ENCODE measurements at regions of chr6 and their contacts with region 1.

Region 1: DNA sequence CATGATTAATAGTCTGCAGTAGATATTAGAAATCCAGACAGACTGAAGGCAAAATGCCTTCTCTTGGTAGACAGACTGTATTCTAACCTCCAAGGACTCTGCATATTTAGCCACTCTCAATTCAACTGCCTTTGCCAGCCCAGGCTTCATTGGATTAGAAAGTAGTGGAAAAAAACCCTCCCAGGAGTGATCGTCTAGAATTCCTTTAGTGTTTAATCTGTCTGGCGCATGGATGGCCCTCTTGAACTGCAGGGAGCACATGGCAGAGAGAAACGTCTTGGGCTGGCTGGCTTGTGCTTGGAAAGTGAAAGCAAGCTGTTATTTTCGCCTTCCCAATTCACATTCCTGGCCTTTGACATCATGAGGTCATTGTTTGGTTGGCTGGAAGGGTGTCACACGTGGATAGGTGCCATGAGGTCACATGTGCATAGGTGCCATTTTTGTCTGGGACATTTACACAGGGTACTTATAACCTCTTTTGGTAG is 30.9 kb upstream of the NEDD9 start:
- DNase-seq: no peak
- H3K4me3 ChIP-seq: no peak overlapping the region
- H3K27ac ChIP-seq: no peak overlapping the region
- H3K4me1 ChIP-seq: peaks cover 0 to 1% (median 0%) of the 10 kb centered on the region in 4 experiments; a peak in 2 of 7 replicates
- H3K27me3 ChIP-seq: no peaks in the 10 kb centered on the region; a peak in 1 of 7 replicates
- CTCF ChIP-seq: no peak
- EP300 ChIP-seq: no peak
- POLR2A ChIP-seq: no peak
- RAD21 ChIP-seq: no peak

Region 2: GRCh38 chr6:11025921-11026635 is 237.3 kb before region 1 on chr6:
- CTCF ChIA-PET with region 1: no interaction called
- POLR2A ChIA-PET with region 1: no interaction called
- DNase-seq: peak in 1 of 2 experiments; percentile 58
- H3K4me3 ChIP-seq: peak overlapping the region in 2 of 4 experiments; percentile 5 to 48; a peak in 3 of 8 replicates
- H3K27ac ChIP-seq: peak overlapping the region; percentile 19; the same call in 1 of the 2 replicates
- H3K4me1 ChIP-seq: peaks cover 0 to 8% (median 3%) of the 10 kb centered on the region in 4 experiments; a peak in 5 of 7 replicates
- H3K27me3 ChIP-seq: no peaks in the 10 kb centered on the region
- CTCF ChIP-seq: no peak
- EP300 ChIP-seq: no peak
- POLR2A ChIP-seq: peak; percentile 31 to 77
- RAD21 ChIP-seq: no peak

Region 3: GRCh38 chr6:11241793-11242201 is 21.5 kb before region 1 on chr6:
- CTCF ChIA-PET with region 1: interaction called, 17 read pairs
- POLR2A ChIA-PET with region 1: no interaction called
- DNase-seq: peak; percentile 38 to 91
- H3K4me3 ChIP-seq: no peak overlapping the region
- H3K27ac ChIP-seq: no peak overlapping the region
- H3K4me1 ChIP-seq: peaks cover 0 to 3% (median 1%) of the 10 kb centered on the region in 4 experiments; a peak in 4 of 7 replicates
- H3K27me3 ChIP-seq: peaks cover 0 to 7% (median 5%) of the 10 kb centered on the region in 4 experiments; a peak in 4 of 7 replicates
- CTCF ChIP-seq: peak; percentile 86 to 94 (median 94)
- EP300 ChIP-seq: peak in 1 of 2 experiments; percentile 50; a peak in 1 of 3 replicates
- POLR2A ChIP-seq: no peak
- RAD21 ChIP-seq: peak; percentile 79 to 92

Region 4: GRCh38 chr6:11251541-11252360 is 11.6 kb before region 1 on chr6:
- CTCF ChIA-PET with region 1: interaction called, 16 read pairs
- POLR2A ChIA-PET with region 1: no interaction called
- DNase-seq: no peak
- H3K4me3 ChIP-seq: no peak overlapping the region
- H3K27ac ChIP-seq: no peak overlapping the region
- H3K4me1 ChIP-seq: peaks cover 0 to 2% (median 0%) of the 10 kb centered on the region in 4 experiments; a peak in 1 of 7 replicates
- H3K27me3 ChIP-seq: no peaks in the 10 kb centered on the region
- CTCF ChIP-seq: no peak
- EP300 ChIP-seq: no peak
- POLR2A ChIP-seq: no peak
- RAD21 ChIP-seq: no peak

Measured in H1 (cell line).